RWPE1 (cell line): ENCODE measurements at regions of chr9 and their contacts with region 1.

Region 1: GRCh38 chr9:136694236-136694942 is 7.1 kb upstream of the AGPAT2 start:
- DNase-seq: peak; percentile 87
- H3K27ac ChIP-seq: peak overlapping the region; percentile 84
- CTCF ChIP-seq: peak; percentile 89

Region 2: GRCh38 chr9:136644598-136645351 is 49.6 kb before region 1 on chr9:
- CTCF ChIA-PET with region 1: no interaction called
- POLR2A ChIA-PET with region 1: no interaction called
- DNase-seq: peak; percentile 95
- H3K27ac ChIP-seq: 0 out of 2 replicates have a peak overlapping the region, but pooled peaks have one; percentile 4
- CTCF ChIP-seq: peak; percentile 100

Region 3: DNA sequence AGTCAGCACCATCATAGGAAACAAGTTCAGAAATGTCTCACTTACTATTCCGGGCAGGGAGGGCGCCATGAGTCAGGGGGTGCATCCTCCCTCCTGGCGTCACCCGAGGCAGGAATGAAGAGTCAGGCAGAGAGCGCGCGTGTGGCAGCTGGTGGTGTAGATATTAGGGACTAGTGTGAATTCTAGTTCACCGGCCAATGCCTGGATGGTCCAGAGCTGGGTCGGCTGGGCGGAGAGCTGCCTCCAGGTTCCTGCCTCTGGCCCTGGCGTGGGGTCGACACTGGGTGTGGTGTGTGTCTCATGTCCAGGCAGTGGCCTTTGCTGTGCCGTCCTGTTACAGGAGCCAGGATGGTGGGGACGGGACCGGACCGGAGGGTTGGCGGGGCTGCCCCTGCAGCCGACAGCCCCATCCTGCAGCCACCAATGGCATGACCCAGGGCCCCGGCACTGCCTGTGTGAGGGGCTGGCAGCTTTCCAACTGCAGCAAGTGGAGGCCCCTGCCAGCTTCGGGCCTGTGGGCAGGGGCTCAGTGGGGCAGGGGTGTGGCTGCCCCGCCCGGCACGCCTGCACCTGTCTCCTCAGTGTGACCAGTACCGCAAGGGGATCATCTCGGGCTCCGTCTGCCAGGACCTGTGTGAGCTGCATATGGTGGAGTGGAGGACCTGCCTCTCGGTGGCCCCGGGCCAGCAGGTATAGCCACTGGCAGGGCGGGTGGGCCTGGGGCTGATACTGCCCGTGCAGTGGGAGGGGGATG is 27.1 kb after region 1 on chr9:
- CTCF ChIA-PET with region 1: interaction called, 22 read pairs
- POLR2A ChIA-PET with region 1: no interaction called
- DNase-seq: peak; percentile 99
- H3K27ac ChIP-seq: peak overlapping the region; percentile 93
- CTCF ChIP-seq: no peak

Region 4: GRCh38 chr9:136773386-136774044 is 79.1 kb after region 1 on chr9:
- CTCF ChIA-PET with region 1: no interaction called
- POLR2A ChIA-PET with region 1: no interaction called
- DNase-seq: peak; percentile 47
- H3K27ac ChIP-seq: no peak overlapping the region
- CTCF ChIP-seq: no peak